Dorsolateral prefrontal cortex (tissue), 120 donors: ENCODE measurements at regions of chr6 and their contacts with region 1.

Region 1: DNA sequence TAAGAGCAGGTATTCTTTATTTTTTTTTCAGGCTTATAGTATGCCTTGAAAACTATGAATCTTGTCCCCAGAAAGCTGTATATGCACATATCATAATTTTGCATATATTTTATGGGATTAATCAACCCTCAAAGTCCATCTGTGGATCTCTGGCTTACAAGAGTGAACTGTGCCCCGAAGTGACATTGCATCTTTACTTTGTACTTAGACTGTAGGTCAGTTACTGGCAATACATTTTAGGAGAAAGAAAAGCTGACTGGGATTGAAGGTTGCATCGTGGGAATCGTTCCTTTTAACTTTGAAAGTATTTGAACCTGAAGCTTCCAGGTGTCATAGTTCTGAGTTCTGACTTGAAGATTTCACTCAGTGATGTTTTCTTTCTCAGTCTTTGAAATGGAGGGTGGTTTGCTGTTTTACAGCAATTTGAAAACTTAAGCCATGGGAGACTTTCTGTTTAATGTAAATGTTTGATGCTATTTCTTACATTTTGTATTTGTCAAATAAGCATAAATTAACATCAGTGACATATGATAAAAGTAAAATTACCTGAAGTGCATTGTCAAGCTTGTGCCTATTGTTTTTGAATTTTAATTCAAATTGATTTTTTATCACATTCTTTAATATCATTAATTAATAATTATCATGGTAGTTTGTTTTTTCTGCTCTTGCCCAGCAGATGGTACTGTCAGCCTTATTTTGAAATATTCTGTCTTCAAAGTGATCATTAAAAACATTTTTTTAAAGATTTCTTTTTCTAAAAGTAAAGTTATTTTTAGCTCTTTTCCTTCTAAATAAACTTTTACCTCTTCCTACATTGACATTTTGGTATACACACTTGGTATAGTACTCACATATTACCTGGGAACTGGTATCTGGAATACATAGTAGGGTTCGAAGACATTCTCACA is 29.0 kb downstream of the L3MBTL3 start:
- DNase-seq: no peak
- H3K4me3 ChIP-seq: no peak overlapping the region
- H3K27ac ChIP-seq: no peak overlapping the region
- H3K27me3 ChIP-seq: no peaks in the 10 kb centered on the region
- CTCF ChIP-seq: peak in 19 of 56 donors; percentile 6 to 46 (median 21)

Region 2: DNA sequence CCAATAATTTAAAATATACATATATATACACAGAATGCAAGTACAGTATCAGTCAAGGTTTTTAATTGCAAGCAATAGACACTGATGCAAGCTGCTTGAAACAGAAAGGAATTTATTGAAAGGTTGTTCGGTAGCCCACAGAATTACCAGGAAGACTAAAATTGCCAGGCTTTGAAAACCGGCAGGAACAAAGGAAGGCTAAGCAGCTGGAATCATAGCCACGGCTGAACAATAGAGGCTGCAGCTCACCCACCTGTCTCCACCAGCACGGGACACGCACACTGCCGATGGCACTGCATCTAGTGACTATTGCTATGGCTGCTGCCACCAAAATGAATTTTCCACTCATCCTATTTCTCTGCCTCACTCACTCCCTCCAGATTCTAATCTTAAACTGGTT is 51.0 kb before region 1 on chr6:
- intact Hi-C with region 1: no loop called
- DNase-seq: no peak
- H3K4me3 ChIP-seq: no peak overlapping the region
- H3K27ac ChIP-seq: no peak overlapping the region
- H3K27me3 ChIP-seq: peaks cover 0 to 3% (median 0%) of the 10 kb centered on the region in 45 donors
- CTCF ChIP-seq: no peak

Region 3: DNA sequence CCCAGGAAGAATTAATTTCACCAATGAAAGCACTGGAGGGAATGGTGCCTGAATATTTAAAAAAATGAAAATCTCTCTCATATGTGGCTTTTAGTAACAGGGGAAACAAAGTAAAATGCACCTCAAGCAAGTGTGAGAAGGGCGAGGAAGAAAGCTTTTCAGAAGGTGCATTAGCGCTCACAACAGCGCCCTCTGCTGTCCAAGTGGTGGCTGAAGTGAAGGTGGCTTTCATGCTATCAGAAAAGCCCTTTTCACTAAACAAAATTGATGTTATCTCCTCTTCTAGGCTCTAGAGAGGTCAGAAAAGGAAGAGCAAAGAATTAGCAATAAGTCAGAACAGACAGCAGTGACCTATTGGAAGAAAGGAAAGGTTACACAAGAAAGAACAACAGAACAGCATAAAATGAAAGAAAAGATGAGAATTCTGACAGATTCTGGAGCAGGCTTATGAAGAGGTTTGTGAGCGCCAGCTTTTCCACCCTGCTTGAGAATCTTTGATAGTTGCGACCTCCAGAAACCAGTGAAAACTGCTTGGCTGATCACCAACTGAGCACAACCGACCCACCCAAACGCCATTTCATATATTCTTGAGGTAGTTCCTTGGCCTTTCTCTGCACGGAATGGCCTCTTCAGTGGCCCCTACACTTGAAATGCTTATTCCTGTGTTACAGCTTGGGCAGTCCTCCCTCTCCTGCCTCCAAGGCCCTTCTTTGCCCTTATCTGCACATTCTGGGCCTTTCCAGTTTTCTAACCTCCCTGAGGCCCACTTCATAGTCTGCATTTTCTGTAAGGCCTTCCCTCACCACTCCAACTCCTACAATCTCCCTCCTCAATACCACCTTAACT is 825.1 kb after region 1 on chr6:
- intact Hi-C with region 1: loop called in 1 of 2 experiments (anchors 10 kb)
- DNase-seq: peak; percentile 46 to 86 (median 78)
- H3K4me3 ChIP-seq: no peak overlapping the region
- H3K27ac ChIP-seq: peak overlapping the region in 13 of 59 donors; percentile 1 to 41 (median 17)
- H3K27me3 ChIP-seq: no peaks in the 10 kb centered on the region
- CTCF ChIP-seq: peak; percentile 70 to 95 (median 88)